Heart right ventricle (tissue), 16 donors: ENCODE measurements at regions of chrX and their contacts with region 1.

Region 1: DNA sequence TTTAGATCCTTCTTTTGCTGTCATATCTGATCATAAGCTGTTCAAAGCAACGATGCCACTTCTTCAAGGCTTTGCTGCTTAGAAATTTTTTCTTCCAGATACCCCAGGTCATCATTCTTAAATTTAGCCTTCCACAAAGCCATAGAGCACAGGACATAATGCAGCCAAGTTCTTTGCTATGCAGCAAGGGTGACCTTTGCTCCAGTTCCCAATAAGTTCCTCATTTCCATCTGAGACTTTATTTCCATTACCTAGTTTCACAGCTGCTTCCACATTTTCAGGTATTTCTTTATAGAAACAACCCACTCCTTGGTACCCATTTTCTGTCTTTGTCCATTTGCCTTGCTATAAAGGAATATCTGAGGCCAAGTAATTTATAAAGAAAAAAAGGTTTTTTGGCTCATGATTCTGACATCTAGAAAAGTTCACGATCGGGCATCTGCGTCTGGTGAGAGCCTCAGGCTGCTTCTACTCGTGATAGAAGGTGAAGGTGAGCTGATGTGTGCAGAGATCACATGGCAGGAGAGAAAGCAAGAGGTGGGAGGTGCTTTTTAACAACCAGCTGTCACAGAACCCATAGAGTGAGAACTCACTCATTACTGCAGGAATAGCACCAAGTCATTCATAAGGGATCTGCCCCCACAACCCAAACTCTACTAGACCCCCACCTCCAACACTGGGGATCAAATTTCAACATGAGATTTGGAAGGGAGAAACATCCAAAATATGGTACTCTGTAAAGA is 11.8 kb upstream of the TASL start:
- DNase-seq: no peak
- ATAC-seq: no peak
- H3K4me3 ChIP-seq: no peak overlapping the region
- H3K27ac ChIP-seq: peak overlapping the region in 1 of 10 donors; percentile 27
- H3K4me1 ChIP-seq: peaks cover 0 to 42% (median 0%) of the 10 kb centered on the region in 9 donors
- H3K27me3 ChIP-seq: peaks cover 0 to 19% (median 0%) of the 10 kb centered on the region in 7 donors
- CTCF ChIP-seq: no peak

Region 2: GRCh38 chrX:30690330-30690729 is 101.0 kb after region 1 on chrX:
- intact Hi-C with region 1: loop called in 1 of 10 experiments (anchors 5 kb)
- DNase-seq: no peak
- ATAC-seq: no peak
- H3K4me3 ChIP-seq: no peak overlapping the region
- H3K27ac ChIP-seq: no peak overlapping the region
- H3K4me1 ChIP-seq: no peaks in the 10 kb centered on the region
- H3K27me3 ChIP-seq: peaks cover 0 to 13% (median 0%) of the 10 kb centered on the region in 7 donors
- CTCF ChIP-seq: no peak

Region 3: GRCh38 chrX:31099536-31100090 is 510.3 kb after region 1 on chrX:
- intact Hi-C with region 1: no loop called
- DNase-seq: no peak
- ATAC-seq: no peak
- H3K4me3 ChIP-seq: no peak overlapping the region
- H3K27ac ChIP-seq: no peak overlapping the region
- H3K4me1 ChIP-seq: peaks cover 0 to 6% (median 0%) of the 10 kb centered on the region in 9 donors
- H3K27me3 ChIP-seq: peaks cover 0 to 5% (median 0%) of the 10 kb centered on the region in 7 donors
- CTCF ChIP-seq: no peak